Esophagus muscularis mucosa (tissue), 4 donors: ENCODE measurements at regions of chr15 and their contacts with region 1.

Region 1: GRCh38 chr15:94119923-94120775 is 111.2 kb upstream of the MCTP2 start:
- DNase-seq: no peak
- H3K4me3 ChIP-seq: no peak overlapping the region
- H3K27ac ChIP-seq: peak overlapping the region; percentile 61 to 82 (median 78)
- H3K4me1 ChIP-seq: peaks cover 7 to 22% (median 17%) of the 10 kb centered on the region in 4 donors
- H3K27me3 ChIP-seq: no peaks in the 10 kb centered on the region
- CTCF ChIP-seq: peak; percentile 95 to 99 (median 96)
- EP300 ChIP-seq: no peak
- POLR2A ChIP-seq: no peak

Region 2: GRCh38 chr15:92797168-92797951 is 1322.8 kb before region 1 on chr15:
- intact Hi-C with region 1: loop called (anchors 5 kb)
- DNase-seq: no peak
- H3K4me3 ChIP-seq: no peak overlapping the region
- H3K27ac ChIP-seq: peak overlapping the region; percentile 57 to 65 (median 64)
- H3K4me1 ChIP-seq: peaks cover 3 to 25% (median 23%) of the 10 kb centered on the region in 4 donors
- H3K27me3 ChIP-seq: no peaks in the 10 kb centered on the region
- CTCF ChIP-seq: peak; percentile 74 to 81 (median 76)
- EP300 ChIP-seq: no peak
- POLR2A ChIP-seq: no peak

Region 3: DNA sequence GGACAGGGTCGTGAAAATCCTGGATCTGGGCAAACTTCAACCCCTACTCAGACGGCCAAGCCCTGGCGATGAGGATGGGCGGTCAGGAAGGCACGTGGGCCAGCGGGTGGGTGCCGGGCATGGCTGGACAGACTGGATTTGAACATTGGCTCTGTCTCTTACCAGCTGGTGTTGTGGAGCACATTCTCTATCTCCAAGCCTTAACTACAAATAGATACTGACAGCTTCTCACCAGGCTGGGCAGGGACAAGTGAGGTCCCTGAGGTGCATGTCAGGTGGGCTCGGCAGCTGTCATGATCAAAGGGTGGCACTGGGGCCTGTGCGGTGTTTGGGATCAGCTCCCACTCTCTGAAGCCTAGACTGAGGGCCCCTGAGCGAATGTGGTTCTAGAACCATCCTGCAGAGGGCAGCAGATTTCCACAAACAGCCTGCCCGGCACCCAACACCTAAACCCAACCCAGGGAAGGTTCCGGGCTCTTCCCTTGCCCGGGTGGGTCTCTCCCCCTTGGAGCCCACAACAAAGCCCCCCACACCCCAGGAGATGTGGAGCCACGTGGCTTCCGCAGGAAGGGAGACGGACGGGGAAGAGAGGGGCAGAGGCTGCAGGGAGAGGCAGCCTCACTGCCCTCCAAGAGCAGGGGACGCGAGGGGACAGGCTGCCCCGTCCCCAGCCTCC is 1089.6 kb before region 1 on chr15:
- intact Hi-C with region 1: loop called (anchors 2 kb)
- DNase-seq: no peak
- H3K4me3 ChIP-seq: peak overlapping the region in 1 of 4 donors; percentile 28
- H3K27ac ChIP-seq: peak overlapping the region; percentile 84 to 91 (median 89)
- H3K4me1 ChIP-seq: peaks cover 48 to 57% (median 57%) of the 10 kb centered on the region in 4 donors
- H3K27me3 ChIP-seq: peaks cover 0 to 5% (median 0%) of the 10 kb centered on the region in 4 donors
- CTCF ChIP-seq: peak; percentile 88 to 96 (median 94)
- EP300 ChIP-seq: no peak
- POLR2A ChIP-seq: no peak

Region 4: GRCh38 chr15:93087825-93088199 is 1032.3 kb before region 1 on chr15:
- intact Hi-C with region 1: loop called (anchors 2 kb)
- DNase-seq: peak; percentile 98
- H3K4me3 ChIP-seq: peak overlapping the region; percentile 79 to 85 (median 81)
- H3K27ac ChIP-seq: peak overlapping the region; percentile 88 to 97 (median 93)
- H3K4me1 ChIP-seq: peaks cover 11 to 74% (median 67%) of the 10 kb centered on the region in 4 donors
- H3K27me3 ChIP-seq: peaks cover 0 to 9% (median 4%) of the 10 kb centered on the region in 4 donors
- CTCF ChIP-seq: peak; percentile 91 to 93 (median 91)
- EP300 ChIP-seq: no peak
- POLR2A ChIP-seq: no peak

Region 5: DNA sequence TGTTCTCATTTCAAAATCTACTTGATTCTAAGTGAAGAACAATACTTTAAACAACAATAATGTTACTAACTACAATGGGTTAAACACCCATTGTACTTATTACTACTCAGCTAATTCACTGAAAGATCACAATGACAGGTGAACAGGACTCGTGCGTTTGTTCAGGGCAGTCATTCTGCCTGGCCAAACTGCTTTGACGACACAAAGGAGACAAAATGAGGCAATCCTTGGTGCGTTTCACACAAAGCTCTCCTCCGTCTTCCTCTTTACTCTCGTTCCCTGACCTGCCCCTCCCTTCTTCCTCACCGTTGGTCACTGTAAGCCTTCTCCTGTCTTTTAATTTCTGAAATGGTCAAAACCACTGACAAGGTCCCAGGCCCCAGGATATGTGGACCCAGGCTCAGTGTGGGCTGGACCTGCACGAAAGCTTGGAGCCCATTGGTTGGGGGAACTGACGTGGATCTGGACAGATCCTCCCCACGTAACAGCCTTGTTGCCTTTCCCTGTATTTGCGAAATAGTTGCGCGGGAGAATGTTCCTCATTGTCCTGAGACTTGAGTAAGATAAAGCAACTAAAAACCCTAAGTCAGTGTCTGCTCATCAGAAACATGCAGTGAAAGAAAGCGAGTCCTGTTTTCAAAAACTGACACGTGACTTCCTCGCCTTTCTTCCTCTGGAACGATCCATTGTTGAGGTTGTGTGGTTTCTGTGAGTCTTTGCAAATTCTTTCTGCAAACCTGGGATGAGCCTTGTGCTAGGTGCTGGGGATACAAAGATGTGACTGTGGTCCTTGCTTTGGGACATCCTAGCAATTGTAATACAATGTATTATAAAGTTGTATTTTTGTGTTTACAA is 884.0 kb before region 1 on chr15:
- intact Hi-C with region 1: no loop called
- DNase-seq: peak; percentile 91
- H3K4me3 ChIP-seq: no peak overlapping the region
- H3K27ac ChIP-seq: no peak overlapping the region
- H3K4me1 ChIP-seq: no peaks in the 10 kb centered on the region
- H3K27me3 ChIP-seq: no peaks in the 10 kb centered on the region
- CTCF ChIP-seq: no peak
- EP300 ChIP-seq: no peak
- POLR2A ChIP-seq: no peak

Region 6: GRCh38 chr15:93997084-93997918 is 122.8 kb before region 1 on chr15:
- intact Hi-C with region 1: loop called (anchors 1 kb)
- DNase-seq: no peak
- H3K4me3 ChIP-seq: no peak overlapping the region
- H3K27ac ChIP-seq: no peak overlapping the region
- H3K4me1 ChIP-seq: peaks cover 0 to 47% (median 36%) of the 10 kb centered on the region in 4 donors
- H3K27me3 ChIP-seq: no peaks in the 10 kb centered on the region
- CTCF ChIP-seq: peak; percentile 70 to 80 (median 72)
- EP300 ChIP-seq: no peak
- POLR2A ChIP-seq: no peak

Region 7: GRCh38 chr15:94258246-94258645 is 138.1 kb after region 1 on chr15:
- intact Hi-C with region 1: no loop called
- DNase-seq: no peak
- H3K4me3 ChIP-seq: no peak overlapping the region
- H3K27ac ChIP-seq: no peak overlapping the region
- H3K4me1 ChIP-seq: peaks cover 0 to 5% (median 0%) of the 10 kb centered on the region in 4 donors
- H3K27me3 ChIP-seq: no peaks in the 10 kb centered on the region
- CTCF ChIP-seq: no peak
- EP300 ChIP-seq: no peak
- POLR2A ChIP-seq: no peak